Ascending aorta (tissue), 2 donors: ENCODE measurements at regions of chr11 and their contacts with region 1.

Region 1: DNA sequence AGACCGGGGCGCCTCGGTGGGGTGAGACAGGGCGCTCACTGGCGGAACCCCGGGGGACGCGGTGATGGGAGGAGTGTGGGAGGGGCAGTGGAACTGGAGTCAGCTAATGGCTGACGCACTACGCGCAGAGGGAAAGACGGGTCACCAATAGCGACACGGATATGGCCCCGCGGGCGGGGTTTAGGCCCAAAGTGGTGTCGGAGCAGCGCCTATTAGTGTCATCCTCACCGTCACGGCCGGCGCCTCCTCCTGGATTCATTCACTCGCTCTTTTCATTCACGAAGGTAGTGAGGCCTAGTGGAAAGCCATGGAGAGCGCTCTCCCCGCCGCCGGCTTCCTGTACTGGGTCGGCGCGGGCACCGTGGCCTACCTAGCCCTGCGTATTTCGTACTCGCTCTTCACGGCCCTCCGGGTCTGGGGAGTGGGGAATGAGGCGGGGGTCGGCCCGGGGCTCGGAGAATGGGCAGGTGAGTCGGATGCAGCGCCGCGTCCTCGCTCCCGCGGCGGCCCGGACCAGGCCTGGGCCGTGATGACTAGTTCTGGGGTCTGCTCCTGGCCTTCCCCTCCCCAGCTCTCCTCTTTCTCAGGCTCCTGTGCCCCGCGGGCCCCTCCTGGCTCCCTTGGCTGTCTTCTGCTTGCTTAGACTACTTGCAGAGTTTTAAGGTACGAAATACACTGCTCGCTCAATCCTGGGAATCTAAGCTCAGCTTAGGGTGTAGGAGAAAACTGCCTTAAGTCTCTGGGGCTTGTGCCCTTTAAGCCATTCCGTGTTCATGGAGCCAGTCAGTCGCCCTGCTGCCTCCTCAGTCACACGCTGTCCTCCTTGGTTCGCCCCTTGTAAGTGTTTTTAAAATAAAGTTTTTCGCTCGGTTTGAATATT is at the start of gene HSD17B12:
- DNase-seq: peak; percentile 98 to 99
- H3K4me3 ChIP-seq: peak within 1 kb of the TSS; percentile 67 to 95
- H3K27ac ChIP-seq: peak within 1 kb of the TSS; percentile 91 to 95
- H3K4me1 ChIP-seq: peaks cover 4 to 21% of the 10 kb centered on the region in 2 donors
- H3K27me3 ChIP-seq: no peaks in the 10 kb centered on the region
- CTCF ChIP-seq: no peak
- total RNA-seq, gene HSD17B12: 48.2 TPM

Region 2: GRCh38 chr11:43643898-43644620 is 36.7 kb before region 1 on chr11:
- intact Hi-C with region 1: loop called (anchors 2 kb)
- DNase-seq: peak; percentile 38 to 91
- H3K4me3 ChIP-seq: peak overlapping the region; percentile 66 to 70
- H3K27ac ChIP-seq: peak overlapping the region in 1 of 2 donors; percentile 26
- H3K4me1 ChIP-seq: peaks cover 4 to 5% of the 10 kb centered on the region in 2 donors
- H3K27me3 ChIP-seq: peaks cover 8% of the 10 kb centered on the region
- CTCF ChIP-seq: no peak

Region 3: GRCh38 chr11:43738590-43739409 is 58.0 kb after region 1 on chr11:
- intact Hi-C with region 1: loop called (anchors 2 kb)
- DNase-seq: no peak
- H3K4me3 ChIP-seq: peak overlapping the region in 1 of 2 donors; percentile 31
- H3K27ac ChIP-seq: peak overlapping the region; percentile 68 to 79
- H3K4me1 ChIP-seq: peaks cover 16 to 35% of the 10 kb centered on the region in 2 donors
- H3K27me3 ChIP-seq: no peaks in the 10 kb centered on the region
- CTCF ChIP-seq: no peak

Region 4: DNA sequence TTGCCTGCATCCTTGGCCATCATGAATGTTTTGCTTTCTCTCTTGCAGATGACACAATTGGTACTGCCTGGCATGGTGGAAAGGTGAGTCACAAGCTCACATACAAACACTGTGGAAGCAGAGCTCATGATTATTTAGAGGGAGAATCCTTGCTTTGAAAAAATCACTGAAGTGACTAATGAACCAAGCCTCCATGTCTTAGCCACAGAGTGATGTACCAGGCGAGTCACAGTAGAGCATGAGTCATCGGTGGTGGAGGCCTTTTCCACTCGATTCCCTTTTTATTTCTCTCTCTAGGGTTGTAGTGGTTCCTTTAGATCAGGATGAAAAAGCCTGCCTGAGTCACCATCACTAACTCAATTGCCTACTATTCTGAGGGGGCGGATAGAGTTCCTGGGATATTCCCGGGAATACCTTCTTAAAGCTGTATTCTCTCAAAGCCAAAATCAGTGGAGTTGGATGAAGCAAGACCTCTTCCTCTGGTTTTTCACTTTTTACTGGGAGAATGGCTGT is 150.2 kb after region 1 on chr11:
- intact Hi-C with region 1: loop called (anchors 5 kb)
- DNase-seq: peak; percentile 22 to 86
- H3K4me3 ChIP-seq: no peak overlapping the region
- H3K27ac ChIP-seq: peak overlapping the region; percentile 58 to 70
- H3K4me1 ChIP-seq: peaks cover 0 to 30% of the 10 kb centered on the region in 2 donors
- H3K27me3 ChIP-seq: no peaks in the 10 kb centered on the region
- CTCF ChIP-seq: no peak

Region 5: DNA sequence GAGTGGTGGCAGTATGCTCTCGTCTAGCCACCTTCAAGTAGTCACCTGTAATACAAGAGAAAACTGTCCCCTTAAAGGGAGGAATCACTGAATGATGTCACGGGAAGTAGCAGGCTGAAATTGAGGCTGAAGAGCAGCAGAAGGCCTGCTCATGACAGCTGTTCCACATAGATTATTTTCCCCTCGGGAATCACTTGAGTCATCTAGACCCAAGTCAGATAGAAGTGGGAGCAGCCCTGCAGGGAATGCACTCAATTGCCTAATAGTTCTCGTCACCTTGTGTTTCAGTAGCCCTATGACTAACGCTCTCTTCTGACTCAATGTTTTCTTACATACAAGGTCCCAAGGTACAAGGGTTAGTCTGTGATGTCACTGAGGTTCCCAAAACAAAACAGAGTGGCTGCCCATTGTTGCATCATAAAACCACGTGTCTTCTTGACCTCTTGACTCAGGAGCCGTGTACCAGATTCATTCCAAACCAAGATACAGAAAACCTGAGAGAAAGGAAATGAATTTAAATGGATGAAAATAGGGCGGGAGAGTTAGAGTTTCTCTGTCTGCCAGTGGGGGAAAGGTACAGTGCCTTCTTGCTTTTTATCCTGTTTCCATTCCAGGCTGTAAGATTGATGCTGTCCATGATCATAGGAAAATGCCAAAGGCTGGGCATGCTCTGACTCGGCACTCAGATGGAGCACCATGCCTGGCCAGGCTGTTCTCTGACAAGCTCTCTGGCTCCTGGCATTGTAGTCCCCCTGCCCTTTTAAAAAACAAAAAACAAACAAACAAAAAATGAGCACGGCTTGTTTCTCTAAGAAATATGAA is 240.0 kb after region 1 on chr11:
- intact Hi-C with region 1: no loop called
- DNase-seq: peak; percentile 66 to 95
- H3K4me3 ChIP-seq: peak overlapping the region in 1 of 2 donors; percentile 9
- H3K27ac ChIP-seq: peak overlapping the region; percentile 99
- H3K4me1 ChIP-seq: peaks cover 32 to 57% of the 10 kb centered on the region in 2 donors
- H3K27me3 ChIP-seq: no peaks in the 10 kb centered on the region
- CTCF ChIP-seq: no peak

Region 6: DNA sequence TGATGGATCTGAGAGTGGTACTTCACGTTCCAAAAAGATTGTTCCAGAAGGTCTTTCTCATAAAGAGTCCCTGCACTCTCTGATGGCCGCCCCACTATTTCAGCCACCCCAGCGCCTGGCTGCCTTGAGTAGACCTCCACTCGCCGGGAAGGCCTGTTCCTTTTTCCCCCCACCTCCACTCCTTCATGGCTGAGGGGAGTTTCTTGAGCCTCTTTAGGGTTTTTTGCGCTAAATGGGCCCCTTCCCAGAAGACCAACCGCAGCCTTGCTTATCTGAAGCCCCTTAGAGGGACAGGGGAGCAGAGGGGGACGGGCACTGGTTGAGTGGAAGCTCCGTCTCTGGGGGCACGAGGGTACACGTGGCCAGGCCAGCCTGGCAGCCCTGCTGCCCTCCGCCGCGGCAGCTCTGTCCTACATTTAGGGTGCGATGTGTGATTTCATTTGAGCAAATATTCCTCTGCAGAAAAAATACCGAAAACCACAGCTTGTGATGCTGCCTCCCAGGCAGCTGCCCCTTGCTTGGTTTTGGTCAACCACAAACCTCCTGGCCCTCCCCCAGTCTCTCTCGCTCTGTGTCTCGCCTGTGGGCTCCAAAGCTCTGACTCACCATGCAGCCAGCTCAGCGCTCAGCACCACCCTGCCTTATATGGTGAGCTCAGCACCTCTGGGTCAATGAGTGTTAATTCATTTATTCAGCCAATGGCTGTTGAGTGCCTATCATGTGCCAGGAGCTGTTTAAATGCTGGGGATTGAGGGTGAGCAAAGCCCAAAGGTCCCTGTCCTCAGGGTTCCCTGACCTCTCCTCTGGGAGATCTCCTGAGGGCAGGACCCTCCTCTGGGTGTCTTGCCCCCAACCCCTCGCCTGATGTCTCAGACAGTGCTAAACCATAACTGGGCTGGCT is 1181.3 kb after region 1 on chr11:
- intact Hi-C with region 1: loop called (anchors 10 kb)
- DNase-seq: peak; percentile 77 to 94
- H3K4me3 ChIP-seq: no peak overlapping the region
- H3K27ac ChIP-seq: peak overlapping the region; percentile 94 to 95
- H3K4me1 ChIP-seq: peaks cover 7 to 15% of the 10 kb centered on the region in 2 donors
- H3K27me3 ChIP-seq: no peaks in the 10 kb centered on the region
- CTCF ChIP-seq: no peak